RWPE1 (cell line): ENCODE measurements at regions of chr19 and their contacts with region 1.

Region 1: DNA sequence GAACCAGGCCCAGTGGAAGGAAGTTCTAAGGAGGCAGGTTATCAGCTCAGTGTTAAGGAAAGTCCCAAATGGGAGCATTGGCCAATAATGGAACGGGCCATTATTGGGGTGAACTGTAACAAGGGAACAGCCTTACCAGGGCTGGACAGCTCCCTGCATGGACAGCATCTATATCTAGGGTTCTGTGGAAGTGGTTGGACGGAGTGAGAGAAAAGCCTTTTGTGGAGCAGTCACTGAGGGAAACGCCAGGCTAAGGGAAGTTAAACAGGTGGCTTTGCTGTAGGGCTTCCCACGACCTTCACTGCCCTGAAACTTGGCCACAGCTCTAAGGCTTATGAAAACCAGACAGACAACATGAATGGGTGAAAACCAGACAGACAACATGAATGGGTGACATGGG is 17.0 kb downstream of the POU2F2 start:
- DNase-seq: no peak
- H3K27ac ChIP-seq: peak overlapping the region; percentile 93
- CTCF ChIP-seq: no peak

Region 2: GRCh38 chr19:42102877-42103276 is 12.3 kb before region 1 on chr19:
- CTCF ChIA-PET with region 1: no interaction called
- POLR2A ChIA-PET with region 1: interaction called, 10 read pairs
- DNase-seq: no peak
- H3K27ac ChIP-seq: no peak overlapping the region
- CTCF ChIP-seq: no peak